Thyroid gland (tissue), 4 donors: ENCODE measurements at regions of chr2 and their contacts with region 1.

Region 1: GRCh38 chr2:113138428-113139322 is 11.3 kb downstream of the IL1RN start:
- DNase-seq: peak; percentile 70 to 74
- H3K4me3 ChIP-seq: no peak overlapping the region
- H3K27ac ChIP-seq: peak overlapping the region; percentile 63 to 79 (median 73)
- H3K4me1 ChIP-seq: peaks cover 6 to 17% of the 10 kb centered on the region in 2 donors
- H3K27me3 ChIP-seq: no peaks in the 10 kb centered on the region
- CTCF ChIP-seq: peak; percentile 56 to 95 (median 82)
- POLR2A ChIP-seq: no peak

Region 2: DNA sequence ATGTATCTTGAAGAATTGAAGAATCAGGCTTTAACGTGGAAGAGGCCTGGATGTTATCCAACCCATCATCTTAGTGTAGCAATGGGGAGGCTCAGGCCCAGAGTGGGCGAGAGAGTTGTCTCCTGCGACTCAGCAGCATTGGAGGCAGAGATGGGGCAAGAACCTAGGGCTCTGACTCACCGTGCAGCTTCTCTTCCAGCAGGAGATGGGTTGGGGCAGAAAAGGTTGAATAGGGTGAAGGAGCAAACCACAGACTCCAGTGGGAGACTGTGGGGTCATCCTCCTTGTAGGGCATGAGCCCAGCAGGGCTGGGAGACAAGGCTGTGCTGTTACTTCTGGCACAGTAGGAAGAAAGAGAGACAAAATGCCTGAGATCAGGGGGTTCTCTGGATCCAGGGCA is 78.3 kb before region 1 on chr2:
- intact Hi-C with region 1: no loop called
- DNase-seq: no peak
- H3K4me3 ChIP-seq: no peak overlapping the region
- H3K27ac ChIP-seq: no peak overlapping the region
- H3K4me1 ChIP-seq: peaks cover 0 to 4% of the 10 kb centered on the region in 2 donors
- H3K27me3 ChIP-seq: no peaks in the 10 kb centered on the region
- CTCF ChIP-seq: no peak
- POLR2A ChIP-seq: no peak

Region 3: DNA sequence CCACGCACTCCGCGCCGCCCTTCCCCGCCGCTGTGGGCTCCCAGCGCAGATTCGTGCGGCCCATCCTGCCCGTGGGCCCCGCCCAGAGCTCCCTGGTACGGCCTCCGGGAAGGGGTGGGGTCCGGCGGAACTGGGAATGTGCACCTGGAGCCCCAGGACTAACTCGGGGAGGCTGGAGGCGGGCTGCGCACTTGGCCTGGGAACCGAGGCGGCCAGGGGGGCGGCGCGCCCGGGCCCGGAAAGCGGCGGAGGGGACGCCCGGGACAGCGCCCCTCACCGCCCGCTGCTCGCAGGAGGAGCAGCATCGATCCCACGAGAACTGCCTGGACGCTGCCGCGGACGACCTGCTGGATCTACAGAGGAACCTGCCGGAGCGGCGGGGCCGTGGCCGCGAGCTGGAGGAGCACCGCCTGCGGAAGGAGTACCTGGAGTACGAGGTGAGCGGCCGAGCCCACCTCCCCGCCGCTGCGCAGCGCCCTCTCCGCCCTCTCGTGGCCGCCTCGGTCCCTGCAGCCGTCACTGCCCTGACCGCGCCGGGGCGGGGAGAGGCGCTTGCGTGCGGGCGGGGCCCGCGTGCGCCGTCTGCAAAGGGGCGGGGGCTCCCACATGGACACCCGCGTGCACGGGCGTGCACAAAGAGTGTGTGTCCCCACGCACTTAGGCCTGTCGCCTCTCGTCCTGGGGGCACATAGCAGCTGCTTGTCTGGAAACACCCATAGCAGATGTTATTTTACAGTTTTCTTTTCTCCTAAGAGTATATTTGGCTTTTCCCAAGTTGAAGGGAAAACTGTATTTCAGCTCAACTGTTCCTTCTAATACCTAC is 60.3 kb after region 1 on chr2:
- intact Hi-C with region 1: loop called (anchors 5 kb)
- DNase-seq: peak; percentile 90
- H3K4me3 ChIP-seq: peak overlapping the region; percentile 24 to 80 (median 62)
- H3K27ac ChIP-seq: peak overlapping the region; percentile 56 to 94 (median 84)
- H3K4me1 ChIP-seq: peaks cover 18 to 42% of the 10 kb centered on the region in 2 donors
- H3K27me3 ChIP-seq: no peaks in the 10 kb centered on the region
- CTCF ChIP-seq: peak; percentile 61 to 98 (median 95)
- POLR2A ChIP-seq: peak in 1 of 2 donors; percentile 85

Region 4: DNA sequence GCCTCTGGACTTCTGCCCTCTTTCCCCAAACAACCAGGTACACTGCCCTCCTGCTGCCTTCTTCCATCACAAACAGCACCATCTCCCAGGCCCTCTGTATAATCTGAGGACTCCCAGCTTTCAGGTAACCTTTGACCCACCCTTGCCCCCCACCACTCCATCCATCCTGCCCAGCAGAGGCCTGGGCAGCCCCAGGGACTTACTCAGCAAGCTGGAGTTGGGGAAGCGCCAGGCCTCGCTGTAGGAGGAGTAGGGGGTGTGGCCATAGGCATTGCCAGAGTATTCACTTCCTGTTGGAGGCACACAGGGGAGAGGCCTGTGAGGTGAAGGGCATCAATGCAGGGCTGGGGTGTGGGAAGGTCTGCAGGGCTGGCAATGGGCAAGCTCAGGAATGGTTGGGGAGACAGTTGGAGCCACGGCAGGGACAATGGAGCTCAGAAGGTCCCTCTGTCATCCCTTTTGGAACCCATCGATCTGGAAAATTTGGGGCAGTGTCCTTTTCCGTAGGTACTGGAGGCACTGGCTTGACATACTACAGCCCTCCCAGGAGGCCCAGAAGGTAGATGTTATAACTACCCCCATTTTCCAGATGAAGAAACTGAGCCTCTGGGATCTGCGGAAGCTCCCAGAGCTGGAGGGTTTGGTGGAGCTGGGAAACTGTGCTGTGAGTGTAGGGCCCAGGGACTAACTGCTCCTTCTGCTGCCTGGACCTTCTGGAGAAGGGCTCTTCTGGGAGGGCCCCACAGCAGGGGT is 81.4 kb after region 1 on chr2:
- intact Hi-C with region 1: no loop called
- DNase-seq: peak; percentile 69 to 72
- H3K4me3 ChIP-seq: no peak overlapping the region
- H3K27ac ChIP-seq: peak overlapping the region; percentile 21 to 92 (median 66)
- H3K4me1 ChIP-seq: peaks cover 85 to 91% of the 10 kb centered on the region in 2 donors
- H3K27me3 ChIP-seq: no peaks in the 10 kb centered on the region
- CTCF ChIP-seq: no peak
- POLR2A ChIP-seq: peak in 1 of 2 donors; percentile 49